GM12878 (cell line): ENCODE measurements at regions of chr19 and their contacts with region 1.

Region 1: GRCh38 chr19:41449079-41449864 is 6.3 kb downstream of the ERICH4 start:
- DNase-seq: no peak
- ATAC-seq: peak; percentile 99
- H3K4me3 ChIP-seq: peak overlapping the region; percentile 61
- H3K27ac ChIP-seq: no peak overlapping the region
- H3K4me1 ChIP-seq: peaks cover 8% of the 10 kb centered on the region
- H3K27me3 ChIP-seq: no peaks in the 10 kb centered on the region
- CTCF ChIP-seq: peak; percentile 94 to 97 (median 97)
- EP300 ChIP-seq: no peak
- POLR2A ChIP-seq: no peak
- RAD21 ChIP-seq: peak; percentile 94

Region 2: DNA sequence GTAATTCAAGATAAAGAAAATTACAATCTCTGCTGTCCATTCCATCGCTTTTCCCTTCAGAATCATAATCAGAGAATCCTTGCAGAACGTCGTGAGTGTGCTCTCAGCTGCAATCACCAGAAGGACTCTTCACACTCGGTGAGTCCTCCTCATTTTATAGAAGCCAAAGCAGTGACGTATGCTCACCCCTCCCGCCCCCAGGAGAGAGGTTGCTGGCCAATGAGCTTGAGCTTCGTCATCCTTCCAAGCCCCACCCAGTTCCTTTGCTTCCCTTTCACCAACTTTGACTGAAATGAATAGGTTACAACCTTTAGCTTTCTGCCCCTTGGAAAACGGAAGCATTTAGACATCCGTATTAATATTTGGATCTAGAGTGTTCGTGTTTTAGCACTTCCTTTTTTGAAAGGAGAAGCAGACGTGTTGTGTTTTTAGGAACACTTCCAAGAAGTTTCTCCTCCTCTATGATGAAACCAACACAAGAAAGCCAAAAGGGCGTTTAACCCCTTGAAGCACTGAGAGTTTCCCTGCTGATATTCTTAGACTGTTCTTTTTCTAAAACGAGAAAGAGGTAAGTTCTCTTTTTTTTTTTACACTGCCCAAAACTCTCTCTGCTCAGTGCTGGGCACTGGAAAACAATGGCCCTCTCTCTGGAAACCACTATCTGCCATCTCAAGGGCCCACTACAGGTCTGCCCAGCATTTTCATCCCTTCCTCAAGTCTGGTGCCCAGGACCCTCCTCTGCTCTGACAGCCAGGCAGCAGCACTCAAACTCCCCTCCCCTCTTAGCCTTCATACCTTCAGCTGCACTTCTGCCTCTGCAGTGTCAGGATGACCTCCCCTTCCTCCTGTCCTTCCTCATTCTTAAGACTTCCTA is 82.4 kb after region 1 on chr19:
- CTCF ChIA-PET with region 1: interaction called, 157 read pairs
- POLR2A ChIA-PET with region 1: no interaction called
- RAD21 ChIA-PET with region 1: interaction called, 56 read pairs
- SMC1A ChIA-PET with region 1: interaction called, 69 read pairs
- in situ Hi-C with region 1: loop called (anchors 10 kb)
- intact Hi-C with region 1: no loop called
- DNase-seq: no peak
- ATAC-seq: peak; percentile 61
- H3K4me3 ChIP-seq: peak overlapping the region; percentile 65
- H3K27ac ChIP-seq: peak overlapping the region; percentile 76
- H3K4me1 ChIP-seq: peaks cover 56% of the 10 kb centered on the region
- H3K27me3 ChIP-seq: no peaks in the 10 kb centered on the region
- CTCF ChIP-seq: no peak
- EP300 ChIP-seq: no peak
- POLR2A ChIP-seq: peak; percentile 96
- RAD21 ChIP-seq: no peak

Region 3: GRCh38 chr19:41548954-41549688 is 99.8 kb after region 1 on chr19:
- CTCF ChIA-PET with region 1: interaction called, 30 read pairs
- POLR2A ChIA-PET with region 1: no interaction called
- RAD21 ChIA-PET with region 1: interaction called, 10 read pairs
- SMC1A ChIA-PET with region 1: interaction called, 17 read pairs
- in situ Hi-C with region 1: no loop called
- intact Hi-C with region 1: no loop called
- DNase-seq: no peak
- ATAC-seq: peak; percentile 68
- H3K4me3 ChIP-seq: peak overlapping the region; percentile 83
- H3K27ac ChIP-seq: peak overlapping the region; percentile 96
- H3K4me1 ChIP-seq: peaks cover 36% of the 10 kb centered on the region
- H3K27me3 ChIP-seq: no peaks in the 10 kb centered on the region
- CTCF ChIP-seq: no peak
- EP300 ChIP-seq: no peak
- POLR2A ChIP-seq: peak; percentile 92
- RAD21 ChIP-seq: no peak

Region 4: DNA sequence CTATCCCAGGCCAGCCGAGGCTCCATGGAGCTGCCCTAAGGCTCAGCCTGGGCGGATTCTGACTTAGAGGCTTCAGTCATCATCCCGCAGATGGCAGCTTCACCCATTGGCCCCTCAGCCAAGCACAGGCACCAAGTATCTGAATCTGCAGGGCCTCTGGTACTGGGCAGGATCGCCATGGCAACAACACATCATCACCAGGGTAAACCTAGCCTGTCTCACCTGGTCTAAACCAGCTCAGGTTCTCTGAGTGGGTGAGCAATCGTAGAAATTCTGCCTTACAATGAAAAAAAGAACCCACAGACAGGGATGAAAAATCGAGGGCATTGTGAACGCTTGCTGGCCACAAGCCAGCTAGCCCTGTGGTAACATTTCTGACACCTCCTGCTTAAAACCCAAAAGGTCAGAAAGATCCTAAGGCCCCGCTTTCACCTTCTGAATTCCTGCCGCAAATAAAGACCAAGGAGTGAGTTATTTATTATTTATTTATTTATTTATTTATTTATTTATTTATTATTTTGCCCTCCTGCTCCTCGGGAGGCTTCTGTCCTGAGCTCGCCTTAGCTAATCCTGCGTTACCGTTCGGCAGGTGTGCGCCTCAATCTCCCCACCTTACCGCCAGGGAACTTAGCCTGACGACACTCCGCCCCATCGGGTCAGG is 114.7 kb after region 1 on chr19:
- CTCF ChIA-PET with region 1: interaction called, 314 read pairs
- POLR2A ChIA-PET with region 1: no interaction called
- RAD21 ChIA-PET with region 1: interaction called, 41 read pairs
- SMC1A ChIA-PET with region 1: interaction called, 41 read pairs
- in situ Hi-C with region 1: no loop called
- intact Hi-C with region 1: loop called (anchors 1 kb)
- DNase-seq: no peak
- ATAC-seq: peak; percentile 29
- H3K4me3 ChIP-seq: no peak overlapping the region
- H3K27ac ChIP-seq: no peak overlapping the region
- H3K4me1 ChIP-seq: peaks cover 17% of the 10 kb centered on the region
- H3K27me3 ChIP-seq: no peaks in the 10 kb centered on the region
- CTCF ChIP-seq: no peak
- EP300 ChIP-seq: no peak
- POLR2A ChIP-seq: no peak
- RAD21 ChIP-seq: no peak

Region 5: GRCh38 chr19:41575998-41576397 is 126.7 kb after region 1 on chr19 and contains the start of gene CEACAM21:
- CTCF ChIA-PET with region 1: interaction called, 314 read pairs
- POLR2A ChIA-PET with region 1: interaction called, 6 read pairs
- RAD21 ChIA-PET with region 1: interaction called, 41 read pairs
- SMC1A ChIA-PET with region 1: interaction called, 41 read pairs
- in situ Hi-C with region 1: loop called (anchors 10 kb)
- intact Hi-C with region 1: no loop called
- DNase-seq: no peak
- ATAC-seq: peak; percentile 99
- H3K4me3 ChIP-seq: peak within 1 kb of the TSS; percentile 67
- H3K27ac ChIP-seq: peak within 1 kb of the TSS; percentile 57
- H3K4me1 ChIP-seq: peaks cover 8% of the 10 kb centered on the region; the same call in 1 of the 2 replicates
- H3K27me3 ChIP-seq: no peaks in the 10 kb centered on the region
- CTCF ChIP-seq: no peak
- EP300 ChIP-seq: no peak
- POLR2A ChIP-seq: peak; percentile 71
- RAD21 ChIP-seq: no peak
- polyA plus RNA-seq, gene CEACAM21: 0.87 to 1.0 TPM